Esophagus squamous epithelium (tissue), 5 donors: ENCODE measurements at regions of chr22 and their contacts with region 1.

Region 1: GRCh38 chr22:19717691-19718455 is 3.6 kb downstream of the SEPTIN5 start:
- DNase-seq: no peak
- H3K4me3 ChIP-seq: peak overlapping the region; percentile 46 to 84 (median 54)
- H3K27ac ChIP-seq: peak overlapping the region in 3 of 4 donors; percentile 12 to 56 (median 50)
- H3K4me1 ChIP-seq: peaks cover 27 to 67% (median 38%) of the 10 kb centered on the region in 3 donors
- H3K27me3 ChIP-seq: peaks cover 0 to 90% (median 0%) of the 10 kb centered on the region in 4 donors
- CTCF ChIP-seq: peak; percentile 91 to 99 (median 97)
- POLR2A ChIP-seq: no peak

Region 2: GRCh38 chr22:19495562-19496323 is 222.1 kb before region 1 on chr22:
- intact Hi-C with region 1: no loop called
- DNase-seq: no peak
- H3K4me3 ChIP-seq: no peak overlapping the region
- H3K27ac ChIP-seq: no peak overlapping the region
- H3K4me1 ChIP-seq: no peaks in the 10 kb centered on the region
- H3K27me3 ChIP-seq: no peaks in the 10 kb centered on the region
- CTCF ChIP-seq: peak in 4 of 6 experiments; percentile 6 to 36 (median 17)
- POLR2A ChIP-seq: no peak

Region 3: GRCh38 chr22:19663286-19663815 is 54.5 kb before region 1 on chr22:
- intact Hi-C with region 1: no loop called
- DNase-seq: no peak
- H3K4me3 ChIP-seq: no peak overlapping the region
- H3K27ac ChIP-seq: peak overlapping the region in 2 of 4 donors; percentile 5 to 29
- H3K4me1 ChIP-seq: peaks cover 6 to 31% (median 7%) of the 10 kb centered on the region in 3 donors
- H3K27me3 ChIP-seq: peaks cover 0 to 8% (median 0%) of the 10 kb centered on the region in 4 donors
- CTCF ChIP-seq: no peak
- POLR2A ChIP-seq: no peak

Region 4: GRCh38 chr22:19679522-19680101 is 38.3 kb before region 1 on chr22:
- intact Hi-C with region 1: loop called (anchors 5 kb)
- DNase-seq: no peak
- H3K4me3 ChIP-seq: no peak overlapping the region
- H3K27ac ChIP-seq: no peak overlapping the region
- H3K4me1 ChIP-seq: peaks cover 0 to 11% (median 6%) of the 10 kb centered on the region in 3 donors
- H3K27me3 ChIP-seq: peaks cover 0 to 37% (median 0%) of the 10 kb centered on the region in 4 donors
- CTCF ChIP-seq: peak; percentile 67 to 91 (median 84)
- POLR2A ChIP-seq: no peak